Vagina (tissue), 2 donors: ENCODE measurements at regions of chr9 and their contacts with region 1.

Region 1: GRCh38 chr9:34591248-34591916 is 1.9 kb upstream of the CNTFR start:
- DNase-seq: no peak
- H3K4me3 ChIP-seq: peak overlapping the region; percentile 52 to 68
- H3K27ac ChIP-seq: peak overlapping the region; percentile 84
- H3K4me1 ChIP-seq: peaks cover 58% of the 10 kb centered on the region
- H3K27me3 ChIP-seq: no peaks in the 10 kb centered on the region
- CTCF ChIP-seq: peak; percentile 88 to 90 (median 90)
- POLR2A ChIP-seq: no peak

Region 2: DNA sequence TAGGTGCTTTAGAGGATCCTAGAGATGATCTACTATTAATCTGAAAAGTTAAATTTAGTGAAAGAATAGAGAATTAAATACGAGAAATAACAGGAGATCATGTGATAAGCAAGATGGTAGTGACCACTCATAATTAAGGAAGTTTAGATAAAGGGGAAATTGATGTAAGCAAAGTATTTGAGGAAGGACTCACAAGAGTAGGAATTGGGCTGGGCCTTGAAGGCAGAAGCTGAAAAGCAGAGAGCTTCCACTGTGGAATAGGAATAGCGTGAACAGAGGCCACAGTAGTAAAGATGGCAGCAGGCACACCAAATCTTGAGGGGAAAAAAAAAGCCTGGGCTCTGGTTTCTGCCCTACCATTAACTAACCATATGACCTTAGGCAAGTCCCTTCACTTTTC is 300.4 kb before region 1 on chr9:
- intact Hi-C with region 1: no loop called
- DNase-seq: no peak
- H3K4me3 ChIP-seq: no peak overlapping the region
- H3K27ac ChIP-seq: no peak overlapping the region
- H3K4me1 ChIP-seq: no peaks in the 10 kb centered on the region
- H3K27me3 ChIP-seq: no peaks in the 10 kb centered on the region
- CTCF ChIP-seq: no peak
- POLR2A ChIP-seq: no peak

Region 3: DNA sequence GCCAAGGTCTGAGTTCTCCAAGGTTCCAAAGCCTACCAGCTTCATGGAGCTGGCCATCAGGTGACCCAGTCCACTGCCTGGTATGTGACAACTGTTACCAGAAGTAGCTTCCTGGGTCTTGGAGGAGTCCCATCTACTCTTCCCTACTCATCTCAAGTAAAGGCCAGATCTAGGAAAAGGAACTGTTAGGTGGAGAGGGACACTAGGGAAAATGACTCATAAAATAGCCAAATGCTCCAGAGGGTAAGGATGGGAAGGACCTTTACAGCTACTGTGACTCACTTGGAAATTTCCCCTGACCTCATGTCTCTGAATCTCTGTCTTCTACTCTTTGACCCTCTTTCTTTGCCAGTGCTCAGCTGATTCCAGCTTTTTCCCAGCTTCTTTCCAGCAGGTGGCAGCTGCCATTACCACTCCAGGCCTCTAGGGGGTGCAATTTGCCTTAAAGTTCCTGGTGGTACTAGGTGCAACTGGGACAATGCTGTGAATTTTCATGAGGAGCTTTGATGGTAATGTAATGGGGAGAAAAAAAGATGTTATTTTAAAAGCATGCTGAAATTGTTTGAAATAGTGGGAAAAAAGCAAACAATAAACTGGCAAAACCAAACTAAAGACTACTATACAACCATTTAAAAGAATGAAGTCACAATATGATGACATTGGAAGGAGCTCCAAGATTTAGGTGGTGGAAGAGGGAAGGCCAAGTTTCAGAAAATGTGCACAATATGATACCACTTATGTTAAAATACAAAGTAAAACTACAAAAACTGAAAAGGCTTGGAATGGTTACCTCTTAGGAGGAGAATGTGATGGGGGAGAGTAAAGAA is 187.6 kb before region 1 on chr9:
- intact Hi-C with region 1: loop called (anchors 10 kb)
- DNase-seq: no peak
- H3K4me3 ChIP-seq: no peak overlapping the region
- H3K27ac ChIP-seq: no peak overlapping the region
- H3K4me1 ChIP-seq: no peaks in the 10 kb centered on the region
- H3K27me3 ChIP-seq: no peaks in the 10 kb centered on the region
- CTCF ChIP-seq: peak; percentile 87 to 94 (median 91)
- POLR2A ChIP-seq: no peak

Region 4: GRCh38 chr9:34546834-34547827 is 44.3 kb before region 1 on chr9:
- intact Hi-C with region 1: loop called (anchors 5 kb)
- DNase-seq: no peak
- H3K4me3 ChIP-seq: no peak overlapping the region
- H3K27ac ChIP-seq: no peak overlapping the region
- H3K4me1 ChIP-seq: no peaks in the 10 kb centered on the region
- H3K27me3 ChIP-seq: no peaks in the 10 kb centered on the region
- CTCF ChIP-seq: peak in 2 of 3 experiments; percentile 35 to 54
- POLR2A ChIP-seq: no peak